HCT116 (cell line): ENCODE measurements at regions of chr2 and their contacts with region 1.

Region 1: GRCh38 chr2:111698743-111699554 is 185.0 kb downstream of the ANAPC1 start:
- DNase-seq: peak; percentile 95
- ATAC-seq: peak; percentile 91
- H3K4me3 ChIP-seq: peak overlapping the region; percentile 27 to 46
- H3K27ac ChIP-seq: peak overlapping the region; percentile 61
- H3K4me1 ChIP-seq: peaks cover 38 to 57% of the 10 kb centered on the region in 2 experiments
- H3K27me3 ChIP-seq: peaks cover 6% of the 10 kb centered on the region; the same call in 1 of the 2 replicates
- CTCF ChIP-seq: peak in 2 of 3 experiments; percentile 32 to 64; a peak in 3 of 6 replicates
- POLR2A ChIP-seq: no peak
- RAD21 ChIP-seq: no peak

Region 2: GRCh38 chr2:111028727-111029126 is 670.2 kb before region 1 on chr2:
- CTCF ChIA-PET with region 1: interaction called, 4 read pairs
- POLR2A ChIA-PET with region 1: no interaction called
- RAD21 ChIA-PET with region 1: no interaction called
- intact Hi-C with region 1: loop called (anchors 5 kb)
- DNase-seq: peak; percentile 40
- ATAC-seq: peak; percentile 49
- H3K4me3 ChIP-seq: no peak overlapping the region
- H3K27ac ChIP-seq: no peak overlapping the region
- H3K4me1 ChIP-seq: peaks cover 33 to 48% of the 10 kb centered on the region in 2 experiments
- H3K27me3 ChIP-seq: no peaks in the 10 kb centered on the region
- CTCF ChIP-seq: peak; percentile 61 to 89 (median 76)
- POLR2A ChIP-seq: no peak
- RAD21 ChIP-seq: peak; percentile 94

Region 3: GRCh38 chr2:111168528-111169239 is 530.3 kb before region 1 on chr2:
- CTCF ChIA-PET with region 1: no interaction called
- POLR2A ChIA-PET with region 1: no interaction called
- RAD21 ChIA-PET with region 1: no interaction called
- intact Hi-C with region 1: no loop called
- DNase-seq: peak; percentile 48
- ATAC-seq: peak; percentile 92
- H3K4me3 ChIP-seq: peak overlapping the region in 1 of 2 experiments; percentile 26; a peak in 1 of 4 replicates
- H3K27ac ChIP-seq: peak overlapping the region; percentile 19; the same call in 1 of the 2 replicates
- H3K4me1 ChIP-seq: peaks cover 32 to 38% of the 10 kb centered on the region in 2 experiments
- H3K27me3 ChIP-seq: no peaks in the 10 kb centered on the region
- CTCF ChIP-seq: no peak
- POLR2A ChIP-seq: no peak
- RAD21 ChIP-seq: peak; percentile 32

Region 4: GRCh38 chr2:111617299-111618225 is 81.4 kb before region 1 on chr2:
- CTCF ChIA-PET with region 1: interaction called, 15 read pairs
- POLR2A ChIA-PET with region 1: no interaction called
- RAD21 ChIA-PET with region 1: interaction called in 1 of 2 experiments, 4 read pairs
- intact Hi-C with region 1: loop called (anchors 5 kb)
- DNase-seq: peak; percentile 40
- ATAC-seq: peak; percentile 92
- H3K4me3 ChIP-seq: peak overlapping the region; percentile 4 to 33; a peak in 3 of 4 replicates
- H3K27ac ChIP-seq: peak overlapping the region; percentile 39
- H3K4me1 ChIP-seq: peaks cover 16 to 21% of the 10 kb centered on the region in 2 experiments
- H3K27me3 ChIP-seq: no peaks in the 10 kb centered on the region
- CTCF ChIP-seq: no peak
- POLR2A ChIP-seq: no peak
- RAD21 ChIP-seq: no peak

Region 5: GRCh38 chr2:112293636-112294401 is 594.9 kb after region 1 on chr2:
- CTCF ChIA-PET with region 1: no interaction called
- POLR2A ChIA-PET with region 1: no interaction called
- RAD21 ChIA-PET with region 1: no interaction called
- intact Hi-C with region 1: no loop called
- DNase-seq: no peak
- ATAC-seq: no peak
- H3K4me3 ChIP-seq: no peak overlapping the region
- H3K27ac ChIP-seq: no peak overlapping the region
- H3K4me1 ChIP-seq: no peaks in the 10 kb centered on the region
- H3K27me3 ChIP-seq: no peaks in the 10 kb centered on the region
- CTCF ChIP-seq: no peak
- POLR2A ChIP-seq: no peak
- RAD21 ChIP-seq: no peak